Dendritic cell treated with granulocyte-macrophage colony-stimulating factor and Interleukin-4, amounts not matched to agents 40 ng/mL and 50 ng/mL, for 4 days (primary cell): ENCODE measurements at regions of chr4 and their contacts with region 1.

Region 1: GRCh38 chr4:15396157-15396800 is 31.6 kb upstream of the C1QTNF7 start:
- H3K4me3 Mint-ChIP-seq: no peak overlapping the region
- H3K27ac Mint-ChIP-seq: no peak overlapping the region
- H3K4me1 Mint-ChIP-seq: peaks cover 36% of the 10 kb centered on the region
- H3K27me3 Mint-ChIP-seq: no peaks in the 10 kb centered on the region

Region 2: DNA sequence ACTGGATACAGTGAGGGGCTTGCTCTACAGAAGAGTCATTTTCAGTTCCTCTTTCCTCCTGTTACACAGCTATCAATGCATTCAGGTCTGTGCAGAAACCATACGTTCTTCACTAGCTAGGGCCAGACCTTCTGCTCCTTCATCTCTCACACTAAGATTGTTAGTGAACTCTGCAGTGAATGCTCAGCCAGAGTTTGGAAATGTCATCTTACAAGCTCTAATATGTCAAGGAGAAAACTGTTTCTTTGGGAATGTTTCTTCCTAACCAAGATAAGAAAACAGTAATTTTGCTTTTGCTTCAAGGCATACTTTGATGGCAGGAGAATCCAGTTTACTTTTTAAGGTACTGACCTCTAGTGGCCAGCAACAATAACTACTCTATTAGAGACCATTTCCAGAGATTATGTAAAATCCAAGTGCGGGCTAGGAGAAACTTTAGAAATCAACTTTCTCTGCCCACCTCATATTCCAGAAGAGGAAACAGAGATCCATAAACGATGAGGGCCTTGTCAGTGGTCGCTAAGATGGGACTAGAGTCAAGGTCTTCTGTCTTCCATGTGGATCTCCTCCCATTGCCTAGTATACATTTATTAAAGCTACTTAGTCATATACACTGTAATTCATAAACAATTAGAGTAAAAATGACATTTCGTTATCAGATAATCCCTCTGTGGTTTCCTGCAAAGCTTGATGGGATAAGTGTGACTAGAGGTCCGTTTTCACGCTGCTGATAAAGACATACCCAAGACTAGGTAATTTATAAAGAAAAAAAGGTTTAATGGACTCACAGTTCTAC is 61.3 kb after region 1 on chr4:
- intact Hi-C with region 1: loop called (anchors 5 kb)
- H3K4me3 Mint-ChIP-seq: no peak overlapping the region
- H3K27ac Mint-ChIP-seq: no peak overlapping the region
- H3K4me1 Mint-ChIP-seq: peaks cover 29% of the 10 kb centered on the region
- H3K27me3 Mint-ChIP-seq: no peaks in the 10 kb centered on the region